Transverse colon (tissue), 4 donors: ENCODE measurements at regions of chr11 and their contacts with region 1.

Region 1: DNA sequence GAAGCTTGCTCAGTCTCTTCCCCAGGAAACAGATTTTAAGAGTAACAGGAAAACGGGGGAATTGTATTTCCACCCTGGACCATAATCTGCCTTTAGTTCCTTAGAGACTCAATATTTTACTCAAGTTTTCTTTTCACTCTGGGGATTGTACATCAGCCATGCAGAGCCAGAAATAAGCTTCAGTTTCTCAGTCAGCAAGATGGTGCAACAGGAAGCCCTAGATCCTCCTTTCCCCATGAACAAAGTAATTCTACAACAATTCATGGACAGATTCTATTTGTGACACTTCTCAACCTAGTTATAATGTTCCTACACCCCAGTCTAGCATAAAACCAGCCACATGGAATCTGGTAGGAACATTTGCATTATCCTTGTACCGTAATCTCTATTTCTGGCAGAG is 24.7 kb downstream of the OR8B2 start:
- DNase-seq: no peak
- H3K4me3 ChIP-seq: no peak overlapping the region
- H3K27ac ChIP-seq: no peak overlapping the region
- H3K4me1 ChIP-seq: no peaks in the 10 kb centered on the region
- H3K27me3 ChIP-seq: no peaks in the 10 kb centered on the region
- CTCF ChIP-seq: no peak
- EP300 ChIP-seq: no peak
- POLR2A ChIP-seq: no peak

Region 2: GRCh38 chr11:124380585-124380984 is 21.0 kb after region 1 on chr11:
- in situ Hi-C with region 1: no loop called
- intact Hi-C with region 1: loop called (anchors 1 kb)
- DNase-seq: no peak
- H3K4me3 ChIP-seq: no peak overlapping the region
- H3K27ac ChIP-seq: no peak overlapping the region
- H3K4me1 ChIP-seq: no peaks in the 10 kb centered on the region
- H3K27me3 ChIP-seq: no peaks in the 10 kb centered on the region
- CTCF ChIP-seq: no peak
- EP300 ChIP-seq: no peak
- POLR2A ChIP-seq: no peak

Region 3: DNA sequence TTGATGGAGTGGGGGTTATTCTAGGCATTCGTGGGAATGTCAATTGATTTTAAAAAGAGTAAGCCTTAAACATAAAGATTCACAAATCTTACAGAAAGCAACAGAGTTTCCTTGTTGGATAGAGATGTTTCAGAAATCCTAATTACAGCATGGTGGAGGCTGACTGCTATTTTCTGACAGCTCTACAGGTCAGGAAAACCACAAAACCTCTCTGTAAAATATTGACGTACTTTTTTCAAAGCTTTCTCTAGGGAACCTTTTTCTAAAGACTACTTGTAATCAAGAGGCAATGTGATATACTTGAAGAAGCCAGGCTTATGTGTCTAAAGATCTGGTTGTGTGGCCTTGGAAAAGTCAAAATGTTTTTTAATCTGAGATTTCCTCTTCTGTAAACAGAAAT is 95.0 kb after region 1 on chr11:
- in situ Hi-C with region 1: no loop called
- intact Hi-C with region 1: no loop called
- DNase-seq: no peak
- H3K4me3 ChIP-seq: no peak overlapping the region
- H3K27ac ChIP-seq: no peak overlapping the region
- H3K4me1 ChIP-seq: no peaks in the 10 kb centered on the region
- H3K27me3 ChIP-seq: no peaks in the 10 kb centered on the region
- CTCF ChIP-seq: no peak
- EP300 ChIP-seq: no peak
- POLR2A ChIP-seq: no peak